Ascending aorta (tissue), 2 donors: ENCODE measurements at regions of chr14 and their contacts with region 1.

Region 1: GRCh38 chr14:34875031-34875922 is at the start of gene BAZ1A:
- DNase-seq: peak; percentile 13 to 80
- H3K4me3 ChIP-seq: peak within 1 kb of the TSS; percentile 73 to 100
- H3K27ac ChIP-seq: peak within 1 kb of the TSS; percentile 99 to 100
- H3K4me1 ChIP-seq: peaks cover 3 to 7% of the 10 kb centered on the region in 2 donors
- H3K27me3 ChIP-seq: no peaks in the 10 kb centered on the region
- CTCF ChIP-seq: peak in 2 of 3 experiments; percentile 35 to 51
- total RNA-seq, gene BAZ1A: 11.2 TPM

Region 2: DNA sequence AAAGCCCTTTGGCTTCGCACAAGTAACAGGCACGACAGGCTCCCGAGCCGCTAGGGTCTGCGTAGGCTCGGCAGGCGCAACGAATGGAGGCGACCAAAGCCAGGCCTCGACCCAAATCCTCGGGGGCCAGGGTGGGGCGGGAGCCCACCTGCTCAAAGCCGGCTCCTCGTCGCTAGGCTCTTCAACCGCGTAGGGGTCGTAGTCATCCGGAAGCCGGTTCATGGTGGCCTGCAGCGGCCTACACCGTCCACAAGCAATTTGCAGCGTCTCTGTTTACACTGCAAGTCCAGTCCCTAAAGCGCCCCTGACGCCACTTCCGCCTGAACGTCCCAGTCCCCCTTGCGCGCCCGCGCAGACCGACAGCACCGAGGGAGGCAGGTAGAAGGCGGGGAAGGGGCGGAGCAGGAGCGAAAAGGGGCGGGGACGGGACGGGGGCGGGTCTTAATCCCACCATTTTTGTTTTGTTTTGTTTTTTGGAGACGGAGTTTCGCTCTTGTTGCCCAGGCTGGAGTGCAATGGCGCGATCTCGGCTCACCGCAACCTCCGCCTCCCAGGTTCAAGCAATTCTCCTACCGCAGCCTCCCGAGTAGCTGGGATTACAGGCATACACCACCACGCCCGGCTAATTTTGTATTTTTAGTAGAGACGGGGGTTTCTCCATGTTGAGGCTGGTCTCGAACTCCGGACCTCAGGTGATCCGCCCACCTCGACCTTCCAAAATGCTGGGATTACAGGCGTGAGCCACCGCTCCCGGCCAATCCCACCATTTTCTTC is 335.7 kb before region 1 on chr14 and contains the start of gene EAPP:
- intact Hi-C with region 1: loop called (anchors 5 kb)
- DNase-seq: peak; percentile 96 to 99
- H3K4me3 ChIP-seq: peak within 1 kb of the TSS; percentile 75 to 86
- H3K27ac ChIP-seq: peak within 1 kb of the TSS; percentile 92
- H3K4me1 ChIP-seq: peaks cover 2 to 3% of the 10 kb centered on the region in 2 donors
- H3K27me3 ChIP-seq: no peaks in the 10 kb centered on the region
- CTCF ChIP-seq: no peak
- total RNA-seq, gene EAPP: 10.1 TPM

Region 3: DNA sequence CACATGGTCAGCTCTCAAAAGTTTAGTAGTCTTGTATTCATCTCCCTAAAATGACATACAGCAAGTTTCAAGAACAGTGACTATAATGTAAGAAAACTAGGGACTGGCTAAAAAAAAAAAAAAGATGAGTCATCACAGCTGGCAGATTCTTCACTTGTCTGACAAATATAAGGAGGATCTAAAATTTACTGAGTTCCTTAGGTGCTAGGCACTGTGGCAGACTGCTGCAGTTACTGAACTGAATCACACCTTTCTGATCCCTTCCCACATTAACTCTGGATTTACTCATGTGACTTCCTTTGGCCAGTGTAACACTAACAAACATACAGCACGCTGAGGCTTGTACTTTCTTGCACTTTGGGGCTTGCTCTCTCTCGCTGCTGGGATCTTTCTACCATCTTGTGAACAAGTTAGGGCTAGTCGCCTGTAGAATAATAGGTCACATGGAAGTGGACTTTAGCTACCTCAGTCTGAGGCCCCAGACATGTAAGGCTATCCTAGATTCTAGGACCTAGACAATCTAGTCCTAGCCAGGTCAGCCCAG is 32.2 kb before region 1 on chr14:
- intact Hi-C with region 1: no loop called
- DNase-seq: no peak
- H3K4me3 ChIP-seq: no peak overlapping the region
- H3K27ac ChIP-seq: peak overlapping the region in 1 of 2 donors; percentile 19
- H3K4me1 ChIP-seq: peaks cover 4% of the 10 kb centered on the region in 2 donors
- H3K27me3 ChIP-seq: no peaks in the 10 kb centered on the region
- CTCF ChIP-seq: no peak

Region 4: GRCh38 chr14:35046048-35046741 is 170.9 kb after region 1 on chr14 and contains the start of gene FAM177A1:
- intact Hi-C with region 1: loop called (anchors 5 kb)
- DNase-seq: peak; percentile 97 to 100
- H3K4me3 ChIP-seq: peak within 1 kb of the TSS; percentile 81 to 89
- H3K27ac ChIP-seq: peak within 1 kb of the TSS; percentile 99
- H3K4me1 ChIP-seq: peaks cover 0 to 14% of the 10 kb centered on the region in 2 donors
- H3K27me3 ChIP-seq: no peaks in the 10 kb centered on the region
- CTCF ChIP-seq: no peak
- total RNA-seq, gene FAM177A1: 35.1 TPM

Region 5: DNA sequence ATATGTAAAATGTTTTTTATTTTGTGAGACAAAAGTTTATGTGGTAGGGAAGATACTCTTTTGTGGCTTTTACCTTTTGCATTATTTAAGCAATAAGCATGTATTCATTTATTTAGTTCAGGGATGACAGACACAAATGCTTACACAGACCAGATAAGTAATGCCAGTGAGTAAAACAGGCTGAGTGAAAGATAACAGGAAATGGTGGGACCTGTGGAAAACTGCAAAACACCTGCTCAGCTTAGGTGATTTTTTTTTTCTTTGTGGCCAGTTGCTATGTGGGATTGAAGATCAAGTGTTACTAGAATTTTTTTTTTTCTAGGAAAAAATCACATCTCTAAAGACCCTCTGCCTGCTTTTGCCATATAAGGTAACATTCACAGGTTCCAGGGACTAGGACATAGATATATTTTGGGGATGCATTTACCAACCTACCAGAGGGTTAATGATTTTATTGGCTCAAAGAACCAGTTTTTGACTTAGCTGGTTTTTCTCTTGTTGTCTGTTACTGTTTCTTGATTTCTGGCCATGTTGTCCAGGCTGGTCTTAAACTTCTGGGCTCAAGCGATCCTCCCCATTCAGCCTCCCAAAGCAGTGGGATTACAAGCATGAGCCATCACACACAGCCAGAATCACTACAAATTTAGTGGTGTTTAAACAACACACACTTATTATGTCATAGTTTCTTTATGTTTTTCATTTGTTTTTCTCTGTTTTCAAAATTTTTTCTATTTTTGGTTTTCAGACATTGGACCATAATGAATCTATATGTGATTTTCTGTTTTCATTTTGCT is 426.7 kb after region 1 on chr14:
- intact Hi-C with region 1: no loop called
- DNase-seq: no peak
- H3K4me3 ChIP-seq: no peak overlapping the region
- H3K27ac ChIP-seq: no peak overlapping the region
- H3K4me1 ChIP-seq: peaks cover 0 to 3% of the 10 kb centered on the region in 2 donors
- H3K27me3 ChIP-seq: no peaks in the 10 kb centered on the region
- CTCF ChIP-seq: no peak

Region 6: DNA sequence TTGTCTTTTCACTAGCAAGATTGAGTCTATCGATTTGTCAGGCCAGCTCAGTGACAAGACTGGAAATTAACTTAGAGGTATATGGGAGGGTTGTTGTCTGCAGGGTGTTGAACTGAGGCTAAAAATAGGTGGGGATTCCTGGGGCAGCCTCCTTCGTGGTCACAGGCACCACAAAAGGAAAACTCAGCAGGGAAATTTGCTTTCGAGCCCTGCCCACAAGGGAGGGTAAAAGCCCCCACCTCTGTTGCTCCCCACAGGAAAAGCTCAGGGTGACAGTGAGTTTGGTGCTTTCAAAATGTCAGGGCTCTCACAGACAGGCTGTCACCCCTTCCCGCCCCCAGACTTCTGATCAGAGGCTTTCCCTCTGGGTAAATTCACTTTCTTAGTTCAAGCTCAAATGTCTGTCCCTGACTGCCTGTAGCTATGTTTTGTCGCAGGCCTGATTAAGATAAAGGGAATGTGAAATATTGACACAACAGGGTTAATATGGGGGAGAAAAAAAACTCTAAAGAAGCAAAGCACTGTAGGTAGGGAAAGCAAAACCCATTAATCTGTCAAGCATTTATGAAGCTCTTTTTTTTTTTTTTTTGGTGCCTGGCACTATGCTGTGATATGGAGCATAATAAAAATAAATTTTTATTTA is 541.0 kb after region 1 on chr14:
- intact Hi-C with region 1: loop called (anchors 5 kb)
- DNase-seq: no peak
- H3K4me3 ChIP-seq: no peak overlapping the region
- H3K27ac ChIP-seq: peak overlapping the region; percentile 65 to 75
- H3K4me1 ChIP-seq: peaks cover 0 to 29% of the 10 kb centered on the region in 2 donors
- H3K27me3 ChIP-seq: no peaks in the 10 kb centered on the region
- CTCF ChIP-seq: no peak